ENCODE measurements at regions of chrX and their contacts with region 1.

Region 1: DNA sequence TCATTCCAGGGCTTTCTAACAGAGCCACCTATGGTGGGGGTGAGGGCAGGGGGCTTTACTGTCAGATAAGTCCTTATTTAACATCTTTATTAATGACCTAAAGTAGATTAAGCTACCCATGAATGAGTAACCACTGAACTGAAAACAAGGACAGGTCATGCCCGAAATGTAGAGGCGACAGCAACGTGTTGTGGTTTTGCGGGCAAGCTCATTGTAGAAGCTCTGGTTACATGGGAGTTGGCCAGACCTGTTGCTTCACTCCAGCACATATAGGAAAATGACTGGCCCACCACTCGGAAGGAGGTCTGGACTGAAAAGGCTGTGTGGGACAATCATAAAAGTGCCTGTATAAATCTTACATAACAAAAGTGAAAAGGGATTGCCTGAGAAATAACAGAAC is 109.6 kb upstream of the NDP start:
- DNase-seq: no peak
- ATAC-seq: no peak
- H3K4me3 ChIP-seq: no peak overlapping the region
- H3K4me3 Mint-ChIP-seq: no peak overlapping the region
- H3K27ac ChIP-seq: no peak overlapping the region
- H3K27ac Mint-ChIP-seq: no peak overlapping the region
- H3K4me1 ChIP-seq: no peaks in the 10 kb centered on the region
- H3K4me1 Mint-ChIP-seq: no peaks in the 10 kb centered on the region
- H3K27me3 ChIP-seq: no peaks in the 10 kb centered on the region
- H3K27me3 Mint-ChIP-seq: peaks cover 2 to 5% of the 10 kb centered on the region in 2 donors

Region 2: DNA sequence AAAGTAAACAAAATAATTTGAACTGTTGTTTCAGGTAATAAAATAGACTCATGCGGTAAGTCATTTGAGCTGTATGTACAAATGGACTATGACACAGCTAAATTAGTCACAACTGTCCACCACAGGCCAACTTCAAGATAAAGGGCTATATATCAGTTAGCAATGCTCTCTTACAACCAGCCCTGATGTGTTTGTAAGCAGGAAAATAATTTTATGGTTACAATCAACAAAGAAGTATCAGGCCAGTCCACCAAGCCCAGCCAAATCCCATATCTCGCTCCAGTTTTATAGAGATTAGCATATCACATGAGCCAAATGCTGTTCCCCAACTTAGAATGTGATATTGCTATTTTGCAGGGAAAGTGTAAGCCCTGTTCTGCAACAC is 760.5 kb after region 1 on chrX:
- CTCF ChIA-PET with region 1: no interaction called
- POLR2A ChIA-PET with region 1: interaction called in 1 of 2 experiments, 15 read pairs
- DNase-seq: no peak
- ATAC-seq: no peak
- H3K4me3 ChIP-seq: no peak overlapping the region
- H3K4me3 Mint-ChIP-seq: no peak overlapping the region
- H3K27ac ChIP-seq: no peak overlapping the region
- H3K27ac Mint-ChIP-seq: no peak overlapping the region
- H3K4me1 ChIP-seq: no peaks in the 10 kb centered on the region
- H3K4me1 Mint-ChIP-seq: no peaks in the 10 kb centered on the region
- H3K27me3 ChIP-seq: no peaks in the 10 kb centered on the region
- H3K27me3 Mint-ChIP-seq: peaks cover 0 to 3% of the 10 kb centered on the region in 2 donors